ENCODE measurements at regions of chr6 and their contacts with region 1.

Region 1: GRCh38 chr6:12899046-12899833 is 182.7 kb downstream of the PHACTR1 start:
- DNase-seq: no peak
- H3K4me3 ChIP-seq: no peak overlapping the region
- H3K27ac ChIP-seq: no peak overlapping the region
- H3K4me1 ChIP-seq: peaks cover 0 to 12% (median 4%) of the 10 kb centered on the region in 4 experiments
- H3K27me3 ChIP-seq: no peaks in the 10 kb centered on the region

Region 2: DNA sequence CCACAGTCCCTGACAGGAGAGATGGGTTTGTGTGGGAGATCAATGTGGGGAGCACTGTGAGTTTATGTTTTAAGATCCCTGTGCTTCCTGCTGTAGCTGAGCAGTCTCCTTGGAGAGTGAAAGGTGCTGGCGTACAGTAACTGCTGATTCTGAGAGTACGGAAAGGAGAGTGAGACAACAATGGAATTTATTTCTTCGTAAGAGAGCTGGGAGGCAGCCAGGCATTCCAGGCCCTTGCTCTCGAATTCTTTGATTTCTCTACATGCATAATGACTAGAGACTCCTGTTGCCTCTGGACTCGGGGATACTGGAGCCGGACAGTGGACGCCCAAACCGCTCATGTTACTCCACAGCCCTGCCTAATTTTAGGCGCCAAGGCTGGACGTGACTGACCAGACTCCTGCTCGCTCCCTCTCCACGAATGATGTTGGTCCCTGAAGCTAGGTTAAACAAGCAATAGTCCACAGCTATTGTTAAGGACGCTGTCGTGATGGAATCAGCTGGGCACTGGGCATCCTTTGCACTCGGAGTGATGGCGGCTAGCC is 313.7 kb before region 1 on chr6:
- CTCF ChIA-PET with region 1: no interaction called
- POLR2A ChIA-PET with region 1: no interaction called
- DNase-seq: no peak
- H3K4me3 ChIP-seq: no peak overlapping the region
- H3K27ac ChIP-seq: no peak overlapping the region
- H3K4me1 ChIP-seq: peaks cover 0 to 2% (median 0%) of the 10 kb centered on the region in 4 experiments
- H3K27me3 ChIP-seq: no peaks in the 10 kb centered on the region

Region 3: DNA sequence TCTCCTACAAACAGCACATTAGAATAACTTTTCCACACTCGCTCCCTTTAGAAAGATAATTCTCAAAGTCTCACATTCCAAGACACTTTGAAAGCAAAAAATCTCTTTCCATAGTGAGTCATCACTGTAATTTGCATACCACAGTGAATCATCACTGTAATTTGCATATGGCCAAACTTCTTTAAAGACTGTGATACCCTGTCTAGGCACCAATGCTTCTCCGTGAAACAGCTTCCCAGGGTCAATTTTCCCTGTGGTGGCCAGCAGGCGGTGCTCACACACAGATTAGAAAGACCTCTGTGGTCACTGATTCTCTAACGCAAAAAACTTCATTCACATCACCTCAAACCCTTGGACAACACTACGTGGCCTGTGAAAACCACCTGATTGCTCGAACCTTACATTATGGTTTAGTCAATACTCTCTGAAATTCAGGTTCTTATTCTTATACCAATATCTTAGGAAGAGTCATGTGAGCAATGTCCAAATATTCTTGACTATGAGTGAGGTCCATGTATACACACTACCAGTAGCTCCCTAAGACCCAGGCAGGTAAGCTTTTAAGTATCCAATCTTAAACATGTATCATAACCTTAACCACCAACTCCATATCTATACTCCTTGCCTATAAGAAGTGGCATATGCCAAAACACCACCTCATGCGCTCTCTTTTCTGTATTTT is 261.1 kb before region 1 on chr6:
- CTCF ChIA-PET with region 1: interaction called, 37 read pairs
- POLR2A ChIA-PET with region 1: no interaction called
- DNase-seq: peak; percentile 71 to 87 (median 84)
- H3K4me3 ChIP-seq: no peak overlapping the region
- H3K27ac ChIP-seq: no peak overlapping the region
- H3K4me1 ChIP-seq: no peaks in the 10 kb centered on the region
- H3K27me3 ChIP-seq: no peaks in the 10 kb centered on the region

Measured in common myeloid progenitor, CD34-positive (primary cell).